ENCODE measurements at regions of chr6 and their contacts with region 1.

Region 1: GRCh38 chr6:19153270-19153980 is 683.7 kb upstream of the ID4 start:
- DNase-seq: no peak
- ATAC-seq: no peak
- H3K4me3 ChIP-seq: no peak overlapping the region
- H3K27ac ChIP-seq: peak overlapping the region; percentile 23
- H3K4me1 ChIP-seq: no peaks in the 10 kb centered on the region
- H3K27me3 ChIP-seq: no peaks in the 10 kb centered on the region
- CTCF ChIP-seq: no peak

Region 2: GRCh38 chr6:19945843-19946358 is 792.5 kb after region 1 on chr6:
- intact Hi-C with region 1: loop called in 1 of 2 experiments (anchors 5 kb)
- DNase-seq: no peak
- ATAC-seq: no peak
- H3K4me3 ChIP-seq: no peak overlapping the region
- H3K27ac ChIP-seq: no peak overlapping the region
- H3K4me1 ChIP-seq: no peaks in the 10 kb centered on the region
- H3K27me3 ChIP-seq: no peaks in the 10 kb centered on the region
- CTCF ChIP-seq: no peak

Measured in psoas muscle (tissue), 8 donors.